CD4-positive, alpha-beta T cell (primary cell): ENCODE measurements at regions of chr11 and their contacts with region 1.

Region 1: DNA sequence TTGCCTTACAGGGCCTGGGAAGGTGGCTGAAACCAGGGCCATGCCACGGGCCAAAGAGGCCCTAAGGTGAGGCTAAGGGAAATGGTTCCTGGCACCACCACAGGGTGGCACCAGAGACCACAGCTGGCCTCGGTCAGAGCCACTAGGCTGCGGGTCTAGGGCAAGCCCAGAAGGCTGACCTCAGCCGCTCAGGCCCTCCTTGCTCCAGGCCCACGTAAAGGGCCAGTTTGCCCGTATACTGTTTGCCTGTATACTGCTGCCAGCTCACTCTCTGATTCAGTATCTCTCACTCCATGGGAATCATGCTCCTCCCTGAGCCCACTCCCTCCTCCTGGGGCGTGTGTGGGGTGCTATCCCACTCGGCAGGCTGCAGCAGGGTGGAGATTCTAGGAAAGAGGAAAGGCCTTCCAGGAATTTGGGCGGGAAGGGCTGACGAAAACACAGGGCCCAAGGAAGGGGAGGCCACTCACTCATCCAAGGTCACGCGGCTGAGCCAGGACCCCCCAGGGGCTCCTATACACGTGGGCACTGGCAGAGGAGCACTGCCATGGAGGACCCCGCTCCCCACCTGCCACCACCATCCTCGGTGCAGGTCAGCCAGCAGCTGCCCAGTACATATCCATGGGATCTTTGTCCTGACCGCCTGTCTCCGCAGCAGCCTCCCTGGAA is 62.4 kb downstream of the NECTIN1 start:
- DNase-seq: peak; percentile 32 to 74 (median 47)
- ATAC-seq: peak; percentile 66
- H3K4me3 ChIP-seq: no peak overlapping the region
- H3K4me3 Mint-ChIP-seq: no peak overlapping the region
- H3K27ac ChIP-seq: no peak overlapping the region
- H3K27ac Mint-ChIP-seq: no peak overlapping the region
- H3K4me1 ChIP-seq: no peaks in the 10 kb centered on the region
- H3K4me1 Mint-ChIP-seq: no peaks in the 10 kb centered on the region
- H3K27me3 ChIP-seq: no peaks in the 10 kb centered on the region
- H3K27me3 Mint-ChIP-seq: no peaks in the 10 kb centered on the region
- CTCF ChIP-seq: peak; percentile 69

Region 2: DNA sequence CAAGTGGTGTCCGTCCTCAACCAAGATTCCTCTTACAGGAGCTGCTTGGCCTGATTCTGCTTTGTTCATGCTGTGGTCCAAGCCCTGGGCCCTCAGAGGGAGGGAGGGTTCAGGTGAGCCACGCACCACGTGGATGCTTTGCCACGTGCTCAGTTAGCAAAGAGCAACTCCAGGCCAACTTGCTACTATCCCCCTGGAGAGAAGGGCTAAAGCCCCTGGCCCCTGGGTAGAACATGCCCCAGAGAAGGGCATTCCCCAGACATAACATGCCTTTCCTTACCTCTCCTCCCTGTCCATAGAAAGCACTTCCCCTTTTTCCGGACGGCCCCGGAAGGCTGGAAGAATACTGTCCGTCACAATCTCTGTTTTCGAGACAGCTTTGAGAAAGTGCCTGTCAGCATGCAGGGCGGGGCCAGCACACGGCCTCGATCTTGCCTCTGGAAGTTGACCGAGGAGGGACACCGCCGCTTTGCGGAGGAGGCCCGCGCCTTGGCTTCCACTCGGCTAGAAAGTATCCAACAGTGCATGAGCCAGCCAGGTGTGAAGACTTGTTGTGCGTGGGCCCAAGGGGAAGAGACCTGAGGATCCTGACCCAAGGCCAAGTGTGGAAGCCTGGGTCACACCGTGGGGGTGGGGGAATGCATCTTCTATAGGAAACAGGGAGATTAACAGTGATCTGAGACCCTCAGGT is 686.3 kb before region 1 on chr11:
- CTCF ChIA-PET with region 1: no interaction called
- POLR2A ChIA-PET with region 1: no interaction called
- intact Hi-C with region 1: no loop called
- DNase-seq: no peak
- ATAC-seq: no peak
- H3K4me3 ChIP-seq: no peak overlapping the region
- H3K4me3 Mint-ChIP-seq: no peak overlapping the region
- H3K27ac ChIP-seq: no peak overlapping the region
- H3K27ac Mint-ChIP-seq: no peak overlapping the region
- H3K4me1 ChIP-seq: no peaks in the 10 kb centered on the region
- H3K4me1 Mint-ChIP-seq: no peaks in the 10 kb centered on the region
- H3K27me3 ChIP-seq: peaks cover 0 to 9% of the 10 kb centered on the region in 2 experiments
- H3K27me3 Mint-ChIP-seq: peaks cover 3% of the 10 kb centered on the region
- CTCF ChIP-seq: no peak

Region 3: DNA sequence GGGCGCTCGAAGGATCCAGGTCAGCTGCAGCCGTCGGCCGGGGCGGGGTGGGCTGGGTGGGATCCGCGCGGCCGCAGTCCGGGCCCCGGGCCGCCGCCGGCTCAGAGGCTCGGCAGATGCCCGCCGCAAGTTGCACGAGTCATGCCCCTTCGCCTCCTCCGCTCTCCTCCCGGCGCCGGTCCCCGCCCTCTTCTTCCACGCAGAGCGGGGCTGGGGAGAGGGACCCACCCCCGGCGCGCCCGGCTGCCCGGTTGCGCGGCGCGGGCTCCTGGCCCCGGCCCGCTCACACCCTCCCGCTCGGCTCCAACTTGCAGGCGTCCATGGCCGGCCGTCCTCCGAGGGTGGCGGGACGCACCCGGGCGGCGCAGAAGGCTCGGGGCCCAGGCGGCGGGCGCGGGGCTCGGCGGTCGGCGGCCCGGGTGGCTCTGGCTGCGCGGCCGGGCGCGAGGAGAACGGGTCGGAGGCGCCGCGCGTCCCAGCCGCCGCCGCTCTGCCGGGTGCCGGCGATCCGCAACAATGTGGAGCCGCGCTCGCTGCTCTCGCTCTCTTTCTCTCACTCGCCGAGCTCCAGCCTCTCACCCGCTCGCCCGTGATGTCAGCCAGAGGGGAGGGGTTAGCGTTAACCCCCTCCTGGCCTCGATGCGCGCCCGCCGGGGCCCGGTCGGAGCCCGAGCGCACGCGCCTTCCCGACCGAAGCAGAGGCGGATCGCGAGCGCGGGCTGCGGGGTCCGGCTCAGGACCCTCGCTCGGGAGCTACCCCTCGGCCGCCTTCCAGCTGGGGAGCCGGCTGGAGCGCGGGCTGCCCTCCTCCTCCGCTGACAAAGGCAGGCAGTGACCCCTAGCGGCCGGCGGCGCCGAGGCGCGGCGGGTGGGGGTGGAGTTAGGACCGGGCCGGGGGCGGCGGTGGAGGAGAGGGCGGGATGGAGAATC is 62.3 kb after region 1 on chr11 and contains the start of gene NECTIN1:
- CTCF ChIA-PET with region 1: interaction called, 7 read pairs
- POLR2A ChIA-PET with region 1: interaction called, 3 read pairs
- intact Hi-C with region 1: loop called (anchors 1 to 5 kb)
- DNase-seq: peak; percentile 64 to 92 (median 81)
- ATAC-seq: peak; percentile 83
- H3K4me3 ChIP-seq: peak within 1 kb of the TSS; percentile 61
- H3K4me3 Mint-ChIP-seq: peak within 1 kb of the TSS; percentile 99
- H3K27ac ChIP-seq: no peak within 1 kb of the TSS
- H3K27ac Mint-ChIP-seq: peak within 1 kb of the TSS; percentile 83
- H3K4me1 ChIP-seq: peaks cover 25% of the 10 kb centered on the region
- H3K4me1 Mint-ChIP-seq: peaks cover 5% of the 10 kb centered on the region
- H3K27me3 ChIP-seq: peaks cover 13 to 27% of the 10 kb centered on the region in 2 experiments
- H3K27me3 Mint-ChIP-seq: peaks cover 26% of the 10 kb centered on the region
- CTCF ChIP-seq: peak; percentile 91
- total RNA-seq, gene NECTIN1: 2.5 to 3.4 TPM

Region 4: DNA sequence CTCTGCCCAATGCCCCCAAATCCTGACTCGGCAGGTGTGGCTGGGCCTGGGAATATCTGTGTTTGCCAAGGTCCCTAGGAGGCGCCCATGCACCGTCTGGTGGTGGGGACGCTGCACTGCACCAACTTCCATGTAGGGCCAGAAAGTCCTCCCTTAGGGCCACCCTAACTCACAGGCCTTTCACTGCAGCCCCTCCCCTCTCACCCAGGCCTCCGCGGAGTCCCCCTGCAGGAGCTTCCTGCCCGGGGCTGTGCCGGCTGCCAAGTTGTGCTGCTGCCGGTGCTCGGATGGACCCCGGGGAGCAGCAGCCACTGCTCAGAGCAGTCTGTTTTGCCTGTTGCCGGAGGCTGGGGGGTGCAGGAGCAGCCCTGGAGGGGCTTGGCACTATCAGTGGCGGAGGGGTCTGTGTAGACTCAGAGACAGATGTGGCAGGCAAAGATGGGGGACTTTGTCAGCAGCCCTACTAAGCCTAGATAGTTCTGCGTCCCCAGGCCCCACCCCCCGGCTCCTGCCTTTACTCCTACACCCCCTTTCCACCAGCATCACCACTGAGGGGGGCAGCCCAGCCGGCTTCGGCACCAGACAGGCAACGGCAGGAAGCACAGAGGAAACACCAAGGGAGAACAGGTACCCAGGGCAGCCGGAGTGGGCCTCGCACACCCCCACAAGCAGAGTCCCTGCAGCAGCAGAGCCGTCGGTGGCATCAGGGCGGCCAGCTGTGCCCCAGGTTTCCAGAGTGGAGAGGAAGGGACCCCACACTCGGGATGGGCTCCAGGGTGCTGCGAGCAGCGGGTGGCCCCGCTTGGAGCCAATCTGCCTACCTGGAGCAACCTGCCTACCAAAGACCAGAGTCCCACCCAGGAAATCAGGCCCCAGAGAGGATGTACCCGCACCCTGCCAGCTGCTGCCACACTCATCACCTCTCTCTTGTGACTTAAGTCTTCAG is 347.0 kb after region 1 on chr11:
- CTCF ChIA-PET with region 1: no interaction called
- POLR2A ChIA-PET with region 1: no interaction called
- intact Hi-C with region 1: loop called in 1 of 2 experiments (anchors 5 kb)
- DNase-seq: peak in 1 of 14 experiments; percentile 3
- ATAC-seq: no peak
- H3K4me3 ChIP-seq: no peak overlapping the region
- H3K4me3 Mint-ChIP-seq: no peak overlapping the region
- H3K27ac ChIP-seq: no peak overlapping the region
- H3K27ac Mint-ChIP-seq: no peak overlapping the region
- H3K4me1 ChIP-seq: no peaks in the 10 kb centered on the region
- H3K4me1 Mint-ChIP-seq: no peaks in the 10 kb centered on the region
- H3K27me3 ChIP-seq: peaks cover 16 to 18% of the 10 kb centered on the region in 2 experiments
- H3K27me3 Mint-ChIP-seq: peaks cover 76% of the 10 kb centered on the region
- CTCF ChIP-seq: no peak

Region 5: GRCh38 chr11:120108154-120108865 is 441.7 kb after region 1 on chr11:
- CTCF ChIA-PET with region 1: no interaction called
- POLR2A ChIA-PET with region 1: no interaction called
- intact Hi-C with region 1: loop called in 1 of 2 experiments (anchors 1 kb)
- DNase-seq: peak; percentile 13 to 65 (median 46)
- ATAC-seq: peak; percentile 57
- H3K4me3 ChIP-seq: no peak overlapping the region
- H3K4me3 Mint-ChIP-seq: no peak overlapping the region
- H3K27ac ChIP-seq: no peak overlapping the region
- H3K27ac Mint-ChIP-seq: no peak overlapping the region
- H3K4me1 ChIP-seq: no peaks in the 10 kb centered on the region
- H3K4me1 Mint-ChIP-seq: no peaks in the 10 kb centered on the region
- H3K27me3 ChIP-seq: peaks cover 5 to 6% of the 10 kb centered on the region in 2 experiments
- H3K27me3 Mint-ChIP-seq: peaks cover 16% of the 10 kb centered on the region
- CTCF ChIP-seq: peak; percentile 88

Region 6: GRCh38 chr11:120303004-120303637 is 636.5 kb after region 1 on chr11:
- CTCF ChIA-PET with region 1: interaction called, 3 read pairs
- POLR2A ChIA-PET with region 1: no interaction called
- intact Hi-C with region 1: loop called in 1 of 2 experiments (anchors 5 kb)
- DNase-seq: peak; percentile 26 to 80 (median 45)
- ATAC-seq: peak; percentile 62
- H3K4me3 ChIP-seq: no peak overlapping the region
- H3K4me3 Mint-ChIP-seq: no peak overlapping the region
- H3K27ac ChIP-seq: no peak overlapping the region
- H3K27ac Mint-ChIP-seq: no peak overlapping the region
- H3K4me1 ChIP-seq: no peaks in the 10 kb centered on the region
- H3K4me1 Mint-ChIP-seq: no peaks in the 10 kb centered on the region
- H3K27me3 ChIP-seq: peaks cover 0 to 3% of the 10 kb centered on the region in 2 experiments
- H3K27me3 Mint-ChIP-seq: peaks cover 45% of the 10 kb centered on the region
- CTCF ChIP-seq: peak; percentile 91